PC-3 (cell line): ENCODE measurements at regions of chr2 and their contacts with region 1.

Region 1: GRCh38 chr2:222931659-222932058 is 70.8 kb downstream of the ACSL3 start:
- DNase-seq: no peak
- ATAC-seq: peak; percentile 11; the same call in 1 of the 2 replicates
- H3K4me3 ChIP-seq: no peak overlapping the region
- H3K27ac ChIP-seq: no peak overlapping the region
- H3K4me1 ChIP-seq: no peaks in the 10 kb centered on the region
- H3K27me3 ChIP-seq: no peaks in the 10 kb centered on the region
- CTCF ChIP-seq: no peak

Region 2: GRCh38 chr2:222743251-222743812 is 188.3 kb before region 1 on chr2:
- CTCF ChIA-PET with region 1: no interaction called
- POLR2A ChIA-PET with region 1: interaction called, 10 read pairs
- intact Hi-C with region 1: no loop called
- DNase-seq: no peak
- ATAC-seq: no peak
- H3K4me3 ChIP-seq: no peak overlapping the region
- H3K27ac ChIP-seq: no peak overlapping the region
- H3K4me1 ChIP-seq: 0 out of 2 replicates have a peak, but pooled peaks cover 4% of the 10 kb centered on the region
- H3K27me3 ChIP-seq: no peaks in the 10 kb centered on the region
- CTCF ChIP-seq: no peak